ENCODE measurements at regions of chr2 and their contacts with region 1.

Region 1: DNA sequence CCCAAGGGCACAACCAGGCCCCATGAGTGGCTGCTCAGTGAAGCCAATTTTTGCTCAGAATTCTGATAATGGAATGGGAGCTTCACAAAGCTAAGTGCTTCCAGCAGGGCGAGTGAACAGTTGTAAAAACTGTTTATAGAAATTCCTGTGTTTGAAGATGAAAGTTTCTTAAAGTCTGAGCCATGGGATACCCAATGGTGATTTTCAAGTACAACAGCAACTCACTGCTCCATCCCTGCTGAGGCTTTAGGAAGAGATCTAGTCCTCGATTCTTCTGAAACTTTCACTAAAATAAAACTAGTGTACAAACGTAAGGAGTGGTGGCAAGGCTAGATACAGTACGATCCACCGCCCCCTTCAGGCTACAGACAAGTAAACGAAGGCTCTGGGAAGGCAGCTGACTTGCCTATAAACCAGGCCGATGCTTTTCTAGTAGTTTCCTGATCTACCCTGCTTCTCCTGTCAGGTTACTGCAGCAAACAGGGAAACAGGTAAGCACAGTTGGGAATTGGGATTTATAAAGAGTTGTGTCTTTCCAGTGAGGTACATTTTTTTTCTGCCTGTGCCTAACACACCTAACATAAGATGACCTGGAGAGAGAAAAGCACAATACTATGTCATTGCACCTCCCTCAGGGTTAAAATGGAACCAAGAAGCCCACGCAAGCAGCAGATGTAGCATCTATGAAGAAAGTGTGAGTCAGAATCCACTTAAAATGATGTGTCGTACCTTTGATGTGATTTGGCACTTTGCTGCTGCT is 108.7 kb downstream of the UXS1 start:
- DNase-seq: no peak
- ATAC-seq: peak; percentile 72

Region 2: GRCh38 chr2:105576440-105577252 is 508.7 kb before region 1 on chr2:
- intact Hi-C with region 1: loop called (anchors 5 kb)
- DNase-seq: no peak
- ATAC-seq: peak; percentile 33

Region 3: DNA sequence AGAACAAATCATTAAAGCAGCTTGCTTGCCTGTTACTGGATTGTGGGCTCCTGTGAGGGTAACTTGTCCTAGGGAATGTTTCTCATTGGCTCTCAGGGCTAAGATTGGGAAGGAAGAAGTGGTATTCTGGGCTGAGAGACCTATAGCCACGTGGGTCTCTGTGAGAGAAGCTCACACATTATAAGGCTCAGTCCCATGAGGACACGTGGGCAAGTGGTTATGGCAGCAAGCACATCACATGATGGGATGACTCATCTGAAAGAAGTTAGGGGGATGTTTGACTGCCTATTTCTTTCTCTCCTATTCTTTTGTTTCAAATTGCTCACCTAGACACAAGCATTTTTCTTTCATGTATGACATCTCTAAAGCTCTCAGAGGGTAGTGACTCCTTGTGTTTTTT is 1218.6 kb after region 1 on chr2:
- intact Hi-C with region 1: no loop called
- DNase-seq: no peak
- ATAC-seq: no peak